Esophagus muscularis mucosa (tissue), 4 donors: ENCODE measurements at regions of chr5 and their contacts with region 1.

Region 1: GRCh38 chr5:761854-762710 is 22.4 kb downstream of the ZDHHC11B start:
- DNase-seq: no peak
- H3K4me3 ChIP-seq: no peak overlapping the region
- H3K27ac ChIP-seq: peak overlapping the region in 1 of 4 donors; percentile 9
- H3K4me1 ChIP-seq: peaks cover 29 to 39% (median 36%) of the 10 kb centered on the region in 4 donors
- H3K27me3 ChIP-seq: no peaks in the 10 kb centered on the region
- CTCF ChIP-seq: no peak
- EP300 ChIP-seq: no peak
- POLR2A ChIP-seq: no peak

Region 2: GRCh38 chr5:671459-672328 is 90.4 kb before region 1 on chr5:
- intact Hi-C with region 1: loop called (anchors 10 kb)
- DNase-seq: no peak
- H3K4me3 ChIP-seq: peak overlapping the region; percentile 11 to 46 (median 36)
- H3K27ac ChIP-seq: peak overlapping the region; percentile 75 to 81 (median 76)
- H3K4me1 ChIP-seq: peaks cover 47 to 93% (median 87%) of the 10 kb centered on the region in 4 donors
- H3K27me3 ChIP-seq: no peaks in the 10 kb centered on the region
- CTCF ChIP-seq: peak; percentile 88 to 98 (median 90)
- EP300 ChIP-seq: no peak
- POLR2A ChIP-seq: no peak

Region 3: GRCh38 chr5:801472-801871 is 39.4 kb after region 1 on chr5:
- intact Hi-C with region 1: no loop called
- DNase-seq: no peak
- H3K4me3 ChIP-seq: no peak overlapping the region
- H3K27ac ChIP-seq: peak overlapping the region in 1 of 4 donors; percentile 4
- H3K4me1 ChIP-seq: peaks cover 0 to 11% (median 10%) of the 10 kb centered on the region in 4 donors
- H3K27me3 ChIP-seq: no peaks in the 10 kb centered on the region
- CTCF ChIP-seq: no peak
- EP300 ChIP-seq: no peak
- POLR2A ChIP-seq: no peak

Region 4: GRCh38 chr5:849651-850301 is 87.7 kb after region 1 on chr5:
- intact Hi-C with region 1: loop called (anchors 5 kb)
- DNase-seq: no peak
- H3K4me3 ChIP-seq: peak overlapping the region; percentile 14 to 22 (median 17)
- H3K27ac ChIP-seq: no peak overlapping the region
- H3K4me1 ChIP-seq: peaks cover 7 to 24% (median 18%) of the 10 kb centered on the region in 4 donors
- H3K27me3 ChIP-seq: peaks cover 0 to 44% (median 0%) of the 10 kb centered on the region in 4 donors
- CTCF ChIP-seq: no peak
- EP300 ChIP-seq: no peak
- POLR2A ChIP-seq: no peak